HEK293T (cell line): ENCODE measurements at regions of chr3 and their contacts with region 1.

Region 1: DNA sequence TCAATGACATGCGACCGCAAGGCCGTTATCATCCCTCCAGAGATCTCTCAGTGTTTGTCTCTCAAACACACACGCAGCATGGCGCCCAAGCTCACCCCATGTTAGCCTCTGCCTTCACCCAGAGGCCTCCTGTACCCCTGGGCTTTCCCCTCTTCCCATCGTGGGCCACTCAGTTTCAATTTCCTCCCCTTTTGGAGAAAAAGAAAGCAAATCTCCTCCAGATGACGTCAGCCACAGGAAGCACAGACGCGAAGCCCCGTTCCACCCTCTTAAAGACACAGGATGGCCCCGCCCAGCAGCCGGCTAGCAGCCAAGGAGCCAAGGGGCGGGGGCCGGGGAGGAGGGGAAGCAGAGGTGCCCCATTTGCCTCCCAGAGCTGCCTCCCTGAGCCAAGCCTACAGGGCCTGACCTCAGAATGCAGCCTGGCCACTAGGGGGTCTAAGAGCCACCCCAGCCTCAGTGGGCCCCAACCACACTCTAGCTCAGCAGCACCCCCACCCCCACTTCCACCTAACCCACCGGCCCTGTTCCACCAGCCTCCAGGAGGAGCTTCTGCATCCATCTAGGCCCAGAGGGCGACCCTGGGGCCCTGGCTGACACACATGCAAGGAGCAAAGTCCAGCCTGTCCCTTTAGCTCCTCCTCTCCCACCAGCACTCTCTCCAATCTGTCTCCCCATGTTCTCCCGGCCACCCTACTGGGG is 26.5 kb downstream of the ATRIP start:
- DNase-seq: peak; percentile 88

Region 2: GRCh38 chr3:48446425-48447193 is 26.5 kb before region 1 on chr3 and contains the start of gene ATRIP:
- CTCF ChIA-PET with region 1: no interaction called
- POLR2A ChIA-PET with region 1: interaction called, 28 read pairs
- DNase-seq: peak; percentile 93

Region 3: DNA sequence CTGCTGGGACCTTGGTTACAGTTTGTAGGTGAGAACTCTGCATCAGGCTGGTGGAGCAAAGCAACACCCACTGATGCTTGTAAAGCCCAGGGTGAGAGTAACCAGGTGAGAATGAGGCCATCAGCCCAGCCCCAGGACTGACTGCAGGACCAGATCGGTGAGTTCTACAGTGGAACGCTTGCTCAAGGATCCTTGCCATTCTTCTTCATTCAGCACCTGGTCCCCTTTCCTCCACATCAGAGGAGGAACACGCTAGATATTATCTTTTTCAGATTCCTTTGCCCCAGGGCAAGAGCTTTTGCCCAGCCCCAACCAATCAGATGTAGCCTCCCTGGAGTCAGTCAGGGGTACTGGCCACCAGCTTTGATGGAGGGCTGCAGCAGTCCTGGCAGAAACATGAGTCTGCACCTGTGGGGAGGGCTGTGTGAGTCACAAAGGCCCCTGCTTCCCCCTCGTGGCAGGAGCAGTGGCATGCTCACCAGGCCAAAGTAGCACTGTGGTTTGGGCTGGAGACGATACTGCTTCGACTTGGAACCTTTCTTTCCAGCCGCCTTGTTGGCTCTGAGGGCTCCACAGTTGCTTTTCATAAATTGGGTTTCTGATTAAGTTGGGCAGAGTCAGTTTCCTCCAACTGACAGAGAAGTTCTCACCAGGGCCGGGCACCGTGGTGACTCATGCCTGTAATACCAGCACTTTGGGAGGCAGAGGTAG is 34.4 kb after region 1 on chr3:
- CTCF ChIA-PET with region 1: interaction called, 10 read pairs
- POLR2A ChIA-PET with region 1: interaction called, 14 read pairs
- DNase-seq: peak; percentile 80

Region 4: DNA sequence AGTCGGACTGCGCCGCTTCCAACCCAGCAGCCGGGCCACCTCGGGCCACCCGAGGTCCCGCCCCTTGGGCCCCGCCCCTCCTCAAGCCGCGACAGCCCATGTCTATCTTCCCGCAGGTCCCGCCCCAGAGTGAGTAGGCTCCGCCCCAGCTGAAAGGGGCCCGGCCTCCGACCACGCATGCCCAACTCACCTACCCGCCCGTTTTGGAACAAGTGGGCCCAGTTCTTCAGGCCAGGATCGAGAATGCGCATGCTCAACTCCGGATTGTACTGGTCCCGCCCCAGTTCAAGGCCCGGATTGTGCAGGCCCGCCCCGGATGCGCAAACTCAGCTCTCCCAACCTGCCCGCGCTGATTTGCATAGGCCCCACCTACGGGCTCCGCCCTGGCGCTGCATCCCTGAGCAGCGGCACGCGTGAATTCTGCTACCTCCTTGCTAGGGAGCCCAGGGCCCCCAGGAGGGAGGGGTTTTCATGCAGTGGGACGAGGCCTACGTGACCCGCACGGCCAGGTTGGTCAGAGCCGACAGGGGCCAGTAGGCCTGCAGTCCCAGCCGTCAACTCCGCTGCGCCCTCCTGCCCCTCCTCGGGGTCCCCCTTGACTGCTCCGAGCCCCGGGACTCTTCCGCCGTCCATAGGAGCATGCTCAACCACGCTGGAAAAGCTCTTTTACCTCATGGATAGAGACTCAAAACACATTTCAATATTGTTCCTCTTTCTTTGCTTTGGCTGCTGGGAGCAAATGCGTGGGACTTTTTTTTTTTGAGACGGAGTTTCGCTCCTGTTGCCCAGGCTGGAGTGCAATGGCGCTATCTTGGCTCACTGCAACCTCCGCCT is 83.9 kb after region 1 on chr3 and contains the start of gene PFKFB4:
- CTCF ChIA-PET with region 1: interaction called, 3 read pairs
- POLR2A ChIA-PET with region 1: interaction called, 19 read pairs
- DNase-seq: peak; percentile 99

Region 5: DNA sequence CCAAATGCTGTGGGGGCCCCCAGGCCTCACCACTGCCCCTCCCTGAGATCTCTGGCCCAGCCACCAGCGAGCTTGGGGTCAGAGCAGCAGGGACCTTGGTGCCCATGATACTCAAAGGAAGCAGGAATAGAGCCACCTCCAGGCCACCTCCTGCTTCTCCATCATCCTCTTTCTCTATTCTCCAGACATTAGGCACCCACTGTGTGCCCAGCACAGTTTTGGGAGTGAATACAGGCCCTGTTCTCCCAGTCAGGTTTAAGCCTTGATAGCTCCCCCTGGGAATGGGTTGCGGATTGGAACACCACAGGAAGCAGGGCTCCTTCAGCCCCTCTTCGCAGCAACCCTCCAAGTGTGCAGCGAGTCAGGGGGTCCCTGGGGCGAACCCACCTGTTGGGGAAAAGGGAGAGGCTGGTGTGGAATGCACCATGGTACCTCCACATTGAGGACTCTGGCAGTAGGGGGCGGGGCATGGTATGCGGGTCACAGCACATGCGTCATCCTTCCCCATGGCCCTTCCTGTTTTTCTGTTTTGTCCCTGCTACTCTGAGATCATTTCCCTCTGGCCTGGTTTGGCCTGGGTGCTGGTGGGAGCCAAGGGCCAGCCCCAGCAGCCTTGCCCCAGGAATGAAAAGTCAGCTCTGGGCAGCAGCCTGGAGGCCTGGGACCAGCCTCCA is 1781.6 kb after region 1 on chr3:
- CTCF ChIA-PET with region 1: no interaction called
- POLR2A ChIA-PET with region 1: no interaction called
- DNase-seq: no peak